AG04450 (cell line): ENCODE measurements at regions of chr9 and their contacts with region 1.

Region 1: DNA sequence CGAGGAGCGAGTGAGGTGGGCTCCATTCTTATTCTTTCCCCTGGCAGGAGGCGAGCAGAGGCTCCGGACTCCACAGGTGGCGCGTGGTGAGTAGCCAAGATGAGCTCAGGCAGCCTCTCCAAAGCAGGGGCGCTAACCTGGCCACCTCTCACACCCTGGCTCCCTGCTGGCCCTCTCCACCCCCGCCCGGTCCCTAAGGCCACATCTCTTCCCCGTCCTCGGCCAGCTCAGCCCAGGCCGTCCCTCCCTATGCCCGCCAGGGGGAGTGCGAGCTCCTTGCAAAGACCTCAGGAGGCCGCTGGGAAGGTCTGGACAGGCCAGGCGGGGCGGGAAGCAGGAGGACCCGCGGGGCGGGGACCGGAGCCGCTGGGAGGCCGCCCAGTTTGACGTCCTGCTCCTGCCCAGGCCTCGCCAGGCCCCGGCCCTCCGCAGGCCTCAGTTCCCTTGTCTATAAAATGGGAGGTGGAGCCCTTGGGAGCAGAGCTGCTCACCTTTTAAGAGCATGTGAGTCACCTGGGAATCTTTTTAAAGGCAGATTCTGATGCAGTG is 46.3 kb upstream of the GGTA1 start:
- DNase-seq: peak; percentile 89
- H3K4me3 ChIP-seq: peak overlapping the region; percentile 27
- H3K27ac ChIP-seq: no peak overlapping the region
- H3K27me3 ChIP-seq: peaks cover 9% of the 10 kb centered on the region
- CTCF ChIP-seq: peak; percentile 94

Region 2: GRCh38 chr9:121510766-121511550 is 35.0 kb before region 1 on chr9:
- CTCF ChIA-PET with region 1: no interaction called
- POLR2A ChIA-PET with region 1: no interaction called
- DNase-seq: no peak
- H3K4me3 ChIP-seq: no peak overlapping the region
- H3K27ac ChIP-seq: no peak overlapping the region
- H3K27me3 ChIP-seq: peaks cover 30% of the 10 kb centered on the region
- CTCF ChIP-seq: no peak

Region 3: GRCh38 chr9:121557581-121558447 is 11.9 kb after region 1 on chr9:
- CTCF ChIA-PET with region 1: interaction called, 17 read pairs
- POLR2A ChIA-PET with region 1: interaction called, 3 read pairs
- DNase-seq: peak; percentile 71
- H3K4me3 ChIP-seq: 0 out of 2 replicates have a peak overlapping the region, but pooled peaks have one; percentile 13
- H3K27ac ChIP-seq: peak overlapping the region; percentile 85
- H3K27me3 ChIP-seq: peaks cover 9% of the 10 kb centered on the region
- CTCF ChIP-seq: no peak

Region 4: DNA sequence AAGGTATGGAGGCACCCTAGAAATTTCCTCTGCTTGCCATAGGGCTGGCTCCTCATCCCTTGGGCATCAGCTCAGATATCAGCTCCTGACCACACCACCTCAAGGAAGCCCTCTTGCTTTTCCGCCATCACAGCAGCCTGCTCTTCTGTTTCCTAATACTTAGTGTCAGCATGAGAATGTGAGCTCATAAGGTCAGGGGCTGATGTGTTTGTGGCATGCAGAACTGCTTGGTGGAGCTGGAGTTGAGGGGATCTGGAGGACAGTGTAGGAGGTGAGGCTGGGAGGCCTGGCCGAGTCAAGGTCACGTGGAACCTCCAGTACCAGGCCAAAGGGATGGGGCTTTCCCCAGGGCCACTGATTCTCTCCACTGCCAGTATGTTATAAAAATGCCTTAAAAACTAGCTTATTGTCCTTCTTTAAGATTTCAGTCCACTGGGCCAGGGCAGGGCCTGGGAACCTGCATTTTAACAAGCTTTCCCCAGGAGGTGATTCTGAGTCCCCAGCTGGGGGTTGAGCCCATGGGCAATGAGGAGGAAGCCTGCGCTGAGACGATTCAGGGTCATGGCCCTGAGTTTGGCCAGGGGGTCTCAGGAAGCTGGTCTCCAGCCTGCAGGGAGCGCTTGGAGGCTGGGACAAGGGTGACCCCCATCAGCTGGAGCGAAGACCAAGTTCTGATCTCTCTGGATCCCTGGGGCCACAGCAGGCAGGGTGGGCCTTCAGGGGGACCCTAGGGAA is 134.1 kb after region 1 on chr9:
- CTCF ChIA-PET with region 1: interaction called, 44 read pairs
- POLR2A ChIA-PET with region 1: interaction called, 5 read pairs
- DNase-seq: no peak
- H3K4me3 ChIP-seq: no peak overlapping the region
- H3K27ac ChIP-seq: no peak overlapping the region
- H3K27me3 ChIP-seq: no peaks in the 10 kb centered on the region
- CTCF ChIP-seq: no peak

Region 5: GRCh38 chr9:121698627-121699570 is 152.9 kb after region 1 on chr9:
- CTCF ChIA-PET with region 1: interaction called, 21 read pairs
- POLR2A ChIA-PET with region 1: interaction called, 4 read pairs
- DNase-seq: no peak
- H3K4me3 ChIP-seq: peak overlapping the region; percentile 69
- H3K27ac ChIP-seq: no peak overlapping the region
- H3K27me3 ChIP-seq: no peaks in the 10 kb centered on the region
- CTCF ChIP-seq: no peak

Region 6: DNA sequence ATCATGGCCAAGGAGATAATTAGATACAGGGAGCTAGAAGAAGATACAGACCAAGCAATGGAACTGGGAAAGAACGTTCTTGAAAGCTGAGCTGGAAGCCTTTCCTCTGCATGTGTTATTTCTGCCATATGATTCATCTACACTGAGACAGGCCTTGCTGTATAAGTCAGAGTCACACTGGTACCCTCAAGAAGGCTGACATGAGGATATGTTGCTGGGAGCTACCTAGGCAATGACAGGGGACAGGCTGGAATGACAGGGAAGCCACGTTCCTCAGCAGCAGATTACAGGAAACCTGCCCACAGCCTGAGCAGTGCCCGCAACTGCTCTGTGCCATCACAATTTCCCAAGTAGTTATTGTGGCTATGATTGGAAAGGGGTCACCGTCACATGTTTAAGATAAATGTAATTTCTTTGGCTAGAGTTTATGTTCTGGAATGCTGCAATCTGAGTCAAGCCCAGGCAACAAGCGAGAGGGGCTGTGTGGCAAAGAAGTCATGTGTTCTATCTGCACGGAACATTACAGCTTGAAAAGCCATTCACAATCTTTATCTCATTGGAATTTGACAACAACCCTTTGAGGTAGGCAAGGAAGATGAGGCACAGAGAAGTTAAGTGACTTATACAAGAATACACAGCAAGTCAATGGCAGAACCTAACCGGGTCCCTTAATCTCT is 438.9 kb after region 1 on chr9:
- CTCF ChIA-PET with region 1: interaction called, 19 read pairs
- POLR2A ChIA-PET with region 1: interaction called, 3 read pairs
- DNase-seq: peak; percentile 49
- H3K4me3 ChIP-seq: no peak overlapping the region
- H3K27ac ChIP-seq: peak overlapping the region; percentile 79
- H3K27me3 ChIP-seq: no peaks in the 10 kb centered on the region
- CTCF ChIP-seq: no peak

Region 7: GRCh38 chr9:122099271-122099869 is 553.4 kb after region 1 on chr9:
- CTCF ChIA-PET with region 1: interaction called, 10 read pairs
- POLR2A ChIA-PET with region 1: no interaction called
- DNase-seq: peak; percentile 32
- H3K4me3 ChIP-seq: no peak overlapping the region
- H3K27ac ChIP-seq: no peak overlapping the region
- H3K27me3 ChIP-seq: peaks cover 2% of the 10 kb centered on the region
- CTCF ChIP-seq: peak; percentile 84